ENCODE measurements at regions of chrX and their contacts with region 1.

Region 1: DNA sequence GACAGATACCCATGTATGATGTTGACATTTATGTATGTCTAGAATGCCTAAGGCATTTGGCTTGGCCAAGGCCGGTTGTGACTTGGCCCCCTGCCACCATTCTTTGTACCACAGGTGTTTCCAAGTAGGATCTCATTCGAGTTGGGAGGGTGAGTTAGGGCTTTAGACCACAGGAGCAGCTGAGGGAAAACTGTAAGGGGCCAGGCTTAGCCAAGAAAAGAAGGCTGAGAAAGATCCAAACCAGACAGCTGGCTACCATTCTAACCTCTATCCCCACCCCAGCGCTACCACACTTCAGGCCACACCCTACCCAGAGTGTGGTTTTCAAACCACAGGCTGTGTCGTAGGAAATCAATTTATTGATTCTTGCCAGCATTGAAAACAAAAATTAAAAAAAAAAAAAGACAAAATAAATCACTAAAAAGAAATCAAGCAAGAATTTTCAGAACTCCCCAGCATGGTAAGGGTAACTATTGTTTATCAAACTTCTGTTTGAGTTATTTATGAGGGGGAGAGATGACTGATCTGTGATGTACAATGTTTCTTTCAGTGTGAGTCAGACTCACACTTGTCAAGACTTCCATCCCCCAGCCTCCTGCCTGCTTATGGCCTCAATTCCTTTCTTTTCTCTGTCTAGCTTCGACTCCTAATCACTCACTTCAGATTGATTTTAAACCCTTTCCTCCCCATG is 9.9 kb downstream of the TMSB4X start:
- DNase-seq: no peak
- ATAC-seq: peak in 4 of 8 donors; percentile 32 to 41 (median 37)
- H3K4me3 ChIP-seq: no peak overlapping the region
- H3K27ac ChIP-seq: peak overlapping the region in 2 of 10 donors; percentile 36 to 45
- H3K4me1 ChIP-seq: peaks cover 0 to 70% (median 12%) of the 10 kb centered on the region in 9 donors
- H3K27me3 ChIP-seq: peaks cover 0 to 39% (median 0%) of the 10 kb centered on the region in 7 donors
- CTCF ChIP-seq: no peak

Region 2: GRCh38 chrX:13029341-13029740 is 44.6 kb after region 1 on chrX:
- intact Hi-C with region 1: loop called in 2 of 10 experiments (anchors 5 kb)
- DNase-seq: peak; percentile 33 to 71
- ATAC-seq: peak; percentile 55 to 90 (median 81)
- H3K4me3 ChIP-seq: peak overlapping the region in 2 of 10 donors; percentile 11 to 26
- H3K27ac ChIP-seq: peak overlapping the region; percentile 39 to 80 (median 70)
- H3K4me1 ChIP-seq: peaks cover 0 to 32% (median 21%) of the 10 kb centered on the region in 9 donors
- H3K27me3 ChIP-seq: peaks cover 0 to 69% (median 0%) of the 10 kb centered on the region in 7 donors
- CTCF ChIP-seq: no peak

Region 3: DNA sequence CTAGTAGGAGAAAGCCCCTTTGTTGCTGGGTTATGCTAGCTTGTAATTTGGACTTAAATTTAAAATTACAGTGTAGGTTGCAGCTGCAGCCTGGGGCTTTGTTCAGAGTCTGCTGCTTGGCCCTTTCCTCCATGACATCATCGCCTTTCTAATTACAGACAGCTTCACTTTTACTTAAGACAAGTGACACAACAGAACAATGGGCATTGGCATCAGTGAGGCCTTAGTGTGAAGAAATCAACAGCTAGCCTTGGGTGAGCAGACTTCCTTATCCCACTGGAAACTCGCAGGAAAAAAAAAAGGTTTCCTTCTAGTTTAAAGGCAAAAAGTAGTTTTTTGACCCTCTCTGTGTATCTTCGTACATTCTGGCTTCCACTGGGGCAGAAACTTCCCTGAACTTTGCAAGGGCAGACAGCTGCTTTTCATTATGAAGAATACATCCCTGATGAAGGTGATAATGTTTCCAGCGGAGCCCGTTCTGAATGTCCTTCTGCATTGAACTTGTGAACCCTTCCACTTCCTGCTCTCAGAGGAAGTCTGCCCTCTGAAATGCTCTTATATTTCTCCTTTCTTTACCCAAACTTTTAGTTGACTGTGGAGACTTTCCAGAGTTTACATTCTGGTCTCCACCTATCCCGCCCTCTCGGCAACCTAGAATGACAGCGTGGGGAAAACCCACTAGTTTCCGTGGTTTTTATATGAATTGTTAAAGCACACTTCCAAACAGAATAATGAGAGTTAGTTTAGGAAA is 182.9 kb after region 1 on chrX:
- intact Hi-C with region 1: loop called in 4 of 10 experiments (anchors 5 to 10 kb)
- DNase-seq: peak in 1 of 2 donors; percentile 45
- ATAC-seq: peak; percentile 74 to 96 (median 88)
- H3K4me3 ChIP-seq: no peak overlapping the region
- H3K27ac ChIP-seq: peak overlapping the region; percentile 50 to 88 (median 74)
- H3K4me1 ChIP-seq: peaks cover 2 to 46% (median 16%) of the 10 kb centered on the region in 9 donors
- H3K27me3 ChIP-seq: peaks cover 0 to 17% (median 0%) of the 10 kb centered on the region in 7 donors
- CTCF ChIP-seq: no peak

Region 4: GRCh38 chrX:13734278-13735172 is 749.8 kb after region 1 on chrX and contains the starts of genes OFD1 and TRAPPC2:
- intact Hi-C with region 1: no loop called
- DNase-seq: peak; percentile 86 to 90
- ATAC-seq: peak; percentile 99 to 100 (median 100)
- H3K4me3 ChIP-seq: peak within 1 kb of the TSS; percentile 53 to 95 (median 81)
- H3K27ac ChIP-seq: peak within 1 kb of the TSS; percentile 75 to 93 (median 90)
- H3K4me1 ChIP-seq: peaks cover 0 to 43% (median 11%) of the 10 kb centered on the region in 9 donors
- H3K27me3 ChIP-seq: peaks cover 0 to 30% (median 0%) of the 10 kb centered on the region in 7 donors
- CTCF ChIP-seq: no peak
- total RNA-seq, gene OFD1: 7.8 to 11.4 (median 9.2) TPM
- total RNA-seq, gene TRAPPC2: 4.9 to 9.3 (median 6.1) TPM